Aorta (tissue), 5 donors: ENCODE measurements at regions of chr2 and their contacts with region 1.

Region 1: GRCh38 chr2:161273038-161273760 is 35.0 kb upstream of the PSMD14 start:
- DNase-seq: no peak
- ATAC-seq: no peak
- H3K4me3 ChIP-seq: no peak overlapping the region
- H3K27ac ChIP-seq: no peak overlapping the region
- H3K4me1 ChIP-seq: no peaks in the 10 kb centered on the region
- H3K27me3 ChIP-seq: no peaks in the 10 kb centered on the region

Region 2: GRCh38 chr2:161223139-161223732 is 50.0 kb before region 1 on chr2:
- intact Hi-C with region 1: loop called (anchors 2 to 5 kb)
- DNase-seq: no peak
- ATAC-seq: peak; percentile 59
- H3K4me3 ChIP-seq: no peak overlapping the region
- H3K27ac ChIP-seq: no peak overlapping the region
- H3K4me1 ChIP-seq: no peaks in the 10 kb centered on the region
- H3K27me3 ChIP-seq: no peaks in the 10 kb centered on the region

Region 3: GRCh38 chr2:161228511-161229240 is 44.5 kb before region 1 on chr2:
- intact Hi-C with region 1: loop called (anchors 2 to 5 kb)
- DNase-seq: no peak
- ATAC-seq: no peak
- H3K4me3 ChIP-seq: no peak overlapping the region
- H3K27ac ChIP-seq: no peak overlapping the region
- H3K4me1 ChIP-seq: no peaks in the 10 kb centered on the region
- H3K27me3 ChIP-seq: no peaks in the 10 kb centered on the region

Region 4: GRCh38 chr2:161370981-161371380 is 97.8 kb after region 1 on chr2:
- intact Hi-C with region 1: no loop called
- DNase-seq: no peak
- ATAC-seq: no peak
- H3K4me3 ChIP-seq: no peak overlapping the region
- H3K27ac ChIP-seq: no peak overlapping the region
- H3K4me1 ChIP-seq: no peaks in the 10 kb centered on the region
- H3K27me3 ChIP-seq: no peaks in the 10 kb centered on the region